H1 (cell line): ENCODE measurements at regions of chr7 and their contacts with region 1.

Region 1: GRCh38 chr7:134724606-134725005 is 54.8 kb upstream of the CALD1 start:
- DNase-seq: peak; percentile 47 to 64
- H3K4me3 ChIP-seq: no peak overlapping the region
- H3K27ac ChIP-seq: no peak overlapping the region
- H3K4me1 ChIP-seq: no peaks in the 10 kb centered on the region
- H3K27me3 ChIP-seq: peaks cover 0 to 2% (median under 1%) of the 10 kb centered on the region in 4 experiments; a peak in 1 of 7 replicates
- CTCF ChIP-seq: peak; percentile 36 to 85 (median 75)
- EP300 ChIP-seq: no peak
- POLR2A ChIP-seq: no peak
- RAD21 ChIP-seq: peak; percentile 82 to 83

Region 2: DNA sequence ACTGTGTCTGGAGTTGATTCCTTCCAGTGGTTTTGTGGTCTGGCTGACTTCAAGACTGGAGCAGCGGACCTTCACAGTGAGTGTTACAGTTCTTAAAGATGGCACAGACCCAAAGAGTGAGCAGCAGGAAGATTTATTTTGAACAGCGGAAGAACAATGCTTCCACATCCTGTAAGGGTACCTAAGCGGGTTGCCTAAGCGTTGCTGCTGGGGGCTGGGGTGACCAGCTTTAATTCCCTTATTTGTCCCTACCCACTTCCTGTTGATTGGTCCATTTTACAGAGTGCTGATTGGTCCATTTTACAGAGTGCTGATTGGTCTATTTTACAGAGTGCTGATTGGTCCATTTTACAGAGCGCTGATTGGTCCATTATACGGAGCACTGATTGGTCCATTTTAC is 162.5 kb before region 1 on chr7:
- CTCF ChIA-PET with region 1: no interaction called
- POLR2A ChIA-PET with region 1: no interaction called
- DNase-seq: no peak
- H3K4me3 ChIP-seq: no peak overlapping the region
- H3K27ac ChIP-seq: no peak overlapping the region
- H3K4me1 ChIP-seq: no peaks in the 10 kb centered on the region
- H3K27me3 ChIP-seq: no peaks in the 10 kb centered on the region
- CTCF ChIP-seq: no peak
- EP300 ChIP-seq: no peak
- POLR2A ChIP-seq: no peak
- RAD21 ChIP-seq: no peak

Region 3: DNA sequence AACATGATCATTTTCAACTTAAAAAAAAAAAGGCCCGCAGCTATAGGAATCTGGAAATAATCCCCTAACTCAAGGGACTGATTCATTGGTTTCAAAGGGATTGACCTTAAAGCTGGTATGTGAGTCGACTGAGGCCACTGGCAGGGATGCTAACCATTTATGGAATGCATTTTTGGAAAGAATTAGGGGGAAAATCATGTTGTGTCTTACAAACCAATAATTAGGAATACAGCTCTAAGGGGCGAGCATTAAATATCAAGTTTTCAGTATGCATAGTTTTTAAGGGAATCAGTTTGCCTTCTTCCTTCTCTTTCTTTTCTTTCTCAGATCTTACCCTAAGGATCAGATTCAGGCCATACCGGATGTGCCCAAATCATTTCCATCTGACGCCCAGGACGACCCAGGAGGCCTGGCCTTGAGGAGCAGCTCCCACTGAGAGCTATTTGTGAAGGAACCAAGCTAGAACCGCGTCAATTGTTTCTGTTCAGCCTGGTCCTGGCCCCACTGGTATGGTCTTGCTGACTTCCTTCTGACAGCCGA is 29.2 kb before region 1 on chr7:
- CTCF ChIA-PET with region 1: interaction called, 52 read pairs
- POLR2A ChIA-PET with region 1: no interaction called
- DNase-seq: no peak
- H3K4me3 ChIP-seq: no peak overlapping the region
- H3K27ac ChIP-seq: no peak overlapping the region
- H3K4me1 ChIP-seq: peaks cover 0 to 4% (median 3%) of the 10 kb centered on the region in 4 experiments; a peak in 2 of 7 replicates
- H3K27me3 ChIP-seq: no peaks in the 10 kb centered on the region
- CTCF ChIP-seq: no peak
- EP300 ChIP-seq: no peak
- POLR2A ChIP-seq: no peak
- RAD21 ChIP-seq: no peak

Region 4: DNA sequence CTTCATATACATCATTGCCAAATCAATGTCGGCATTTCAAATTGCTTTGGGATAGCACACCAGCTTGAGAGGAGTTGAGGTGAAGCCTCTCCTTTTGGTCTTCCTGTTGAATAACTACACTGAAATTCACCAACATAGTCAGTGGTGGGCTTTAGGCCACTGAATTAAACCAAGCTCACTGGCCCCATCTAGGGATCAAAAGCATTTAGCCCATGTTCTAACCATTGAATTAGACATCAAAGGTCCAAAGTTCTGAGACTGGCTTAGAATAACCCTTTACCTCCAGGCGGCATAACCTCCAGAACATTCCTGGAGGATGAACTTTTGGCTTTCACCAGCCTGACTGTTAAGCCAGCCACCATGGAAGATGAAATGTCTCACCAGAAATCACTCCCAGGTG is 23.3 kb before region 1 on chr7:
- CTCF ChIA-PET with region 1: interaction called, 52 read pairs
- POLR2A ChIA-PET with region 1: no interaction called
- DNase-seq: no peak
- H3K4me3 ChIP-seq: no peak overlapping the region
- H3K27ac ChIP-seq: no peak overlapping the region
- H3K4me1 ChIP-seq: peaks cover 0 to 7% (median 4%) of the 10 kb centered on the region in 4 experiments; a peak in 3 of 7 replicates
- H3K27me3 ChIP-seq: no peaks in the 10 kb centered on the region
- CTCF ChIP-seq: peak in 2 of 3 experiments; percentile 61 to 66; a peak in 3 of 4 replicates
- EP300 ChIP-seq: no peak
- POLR2A ChIP-seq: no peak
- RAD21 ChIP-seq: peak; percentile 62 to 71

Region 5: DNA sequence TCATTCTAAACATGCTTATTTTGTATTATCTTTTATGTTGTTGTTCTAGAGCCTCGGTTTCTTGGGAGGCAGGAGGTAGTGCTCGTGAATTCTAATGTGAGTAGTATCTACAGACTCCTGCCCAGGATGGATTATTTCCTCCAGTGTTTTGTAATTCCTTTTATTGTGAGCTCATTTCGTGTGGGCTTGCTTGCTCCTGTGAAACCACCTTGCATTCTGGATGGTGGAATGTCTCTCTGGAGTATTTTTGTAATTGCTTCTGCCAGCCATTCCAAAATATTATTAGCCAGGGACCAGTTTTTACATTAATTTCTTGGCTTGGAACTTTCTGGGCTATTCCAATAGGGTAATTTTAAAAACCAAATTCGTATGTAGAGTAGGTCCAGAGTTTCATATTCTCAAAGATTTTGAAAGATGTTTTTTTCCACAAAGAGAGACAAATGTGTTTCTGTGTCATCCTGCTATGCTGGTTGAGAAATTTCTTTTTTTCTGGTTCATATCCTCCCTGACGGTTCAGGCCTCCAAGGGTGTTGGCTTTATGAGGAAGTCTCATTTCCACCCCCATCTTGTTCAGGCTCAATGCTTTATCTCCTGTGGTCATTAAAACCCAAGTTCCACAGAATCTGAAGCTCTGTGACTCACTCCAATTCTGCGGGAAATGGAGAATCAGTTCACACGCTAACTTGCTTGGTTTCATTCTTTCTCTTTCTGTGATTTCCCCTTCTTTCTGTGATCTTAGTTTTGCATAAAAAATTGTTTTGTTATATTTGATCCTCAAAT is 13.2 kb after region 1 on chr7:
- CTCF ChIA-PET with region 1: interaction called, 249 read pairs
- POLR2A ChIA-PET with region 1: no interaction called
- DNase-seq: no peak
- H3K4me3 ChIP-seq: no peak overlapping the region
- H3K27ac ChIP-seq: no peak overlapping the region
- H3K4me1 ChIP-seq: peaks cover 0 to 3% (median 1%) of the 10 kb centered on the region in 4 experiments; a peak in 2 of 7 replicates
- H3K27me3 ChIP-seq: no peaks in the 10 kb centered on the region
- CTCF ChIP-seq: no peak
- EP300 ChIP-seq: no peak
- POLR2A ChIP-seq: no peak
- RAD21 ChIP-seq: no peak

Region 6: DNA sequence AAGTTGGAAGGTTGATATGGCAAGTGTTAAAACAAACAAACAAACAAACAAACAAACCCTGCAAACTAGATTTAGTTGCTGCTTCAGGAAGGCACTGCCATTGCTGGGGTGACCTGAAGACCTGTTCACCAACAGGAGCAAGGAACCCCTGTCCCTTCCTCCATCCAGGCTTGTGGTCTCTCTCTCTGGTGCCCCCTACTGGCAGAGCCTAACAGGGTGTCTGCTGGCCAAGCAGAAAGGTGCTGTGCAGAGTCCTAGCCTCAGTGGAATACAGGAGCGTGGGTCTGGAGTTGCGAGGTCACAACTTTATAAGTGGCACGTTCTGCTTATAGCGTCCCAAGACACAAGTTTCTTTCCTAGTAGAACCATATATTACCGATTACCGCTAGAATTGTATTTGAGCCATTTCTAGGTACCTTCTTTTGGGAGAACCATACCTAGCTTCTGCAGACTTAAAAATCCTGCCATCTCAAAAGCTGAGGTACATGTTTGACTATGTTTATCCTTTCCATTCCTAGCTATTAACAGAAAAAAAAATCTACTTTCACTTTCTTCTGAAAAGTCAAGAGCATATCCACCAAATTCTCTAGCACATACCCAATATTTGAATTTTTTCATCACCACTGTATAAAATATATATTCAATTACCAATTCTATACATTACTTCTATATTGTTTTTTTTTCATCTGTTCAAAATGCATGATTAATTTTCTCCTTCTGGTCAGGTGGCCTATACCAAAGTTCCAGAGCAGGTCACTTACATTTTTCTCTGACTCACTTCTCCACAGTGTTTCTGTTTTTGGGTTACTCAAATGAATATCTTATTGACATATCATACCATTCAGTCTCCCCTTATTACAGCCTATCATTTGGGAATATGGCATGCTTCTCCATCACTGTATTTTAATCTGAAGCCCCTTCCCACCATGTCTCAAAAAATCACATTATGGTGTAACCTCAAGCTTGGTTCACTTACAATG is 25.8 kb after region 1 on chr7:
- CTCF ChIA-PET with region 1: interaction called, 249 read pairs
- POLR2A ChIA-PET with region 1: interaction called, 3 read pairs
- DNase-seq: peak; percentile 50 to 89
- H3K4me3 ChIP-seq: no peak overlapping the region
- H3K27ac ChIP-seq: no peak overlapping the region
- H3K4me1 ChIP-seq: no peaks in the 10 kb centered on the region; a peak in 2 of 7 replicates
- H3K27me3 ChIP-seq: no peaks in the 10 kb centered on the region
- CTCF ChIP-seq: peak; percentile 83 to 97 (median 85)
- EP300 ChIP-seq: no peak
- POLR2A ChIP-seq: no peak
- RAD21 ChIP-seq: peak; percentile 73 to 84

Region 7: GRCh38 chr7:134766779-134767519 is 42.3 kb after region 1 on chr7:
- CTCF ChIA-PET with region 1: interaction called, 18 read pairs
- POLR2A ChIA-PET with region 1: no interaction called
- DNase-seq: no peak
- H3K4me3 ChIP-seq: no peak overlapping the region
- H3K27ac ChIP-seq: no peak overlapping the region
- H3K4me1 ChIP-seq: peaks cover 0 to 2% (median 0%) of the 10 kb centered on the region in 4 experiments; a peak in 1 of 7 replicates
- H3K27me3 ChIP-seq: no peaks in the 10 kb centered on the region; a peak in 1 of 7 replicates
- CTCF ChIP-seq: no peak
- EP300 ChIP-seq: no peak
- POLR2A ChIP-seq: no peak
- RAD21 ChIP-seq: no peak

Region 8: GRCh38 chr7:134943764-134944400 is 219.3 kb after region 1 on chr7:
- CTCF ChIA-PET with region 1: interaction called, 15 read pairs
- POLR2A ChIA-PET with region 1: no interaction called
- DNase-seq: no peak
- H3K4me3 ChIP-seq: no peak overlapping the region
- H3K27ac ChIP-seq: no peak overlapping the region
- H3K4me1 ChIP-seq: no peaks in the 10 kb centered on the region
- H3K27me3 ChIP-seq: no peaks in the 10 kb centered on the region
- CTCF ChIP-seq: peak in 2 of 3 experiments; percentile 6 to 26; a peak in 2 of 4 replicates
- EP300 ChIP-seq: no peak
- POLR2A ChIP-seq: no peak
- RAD21 ChIP-seq: peak; percentile 48 to 55